GM12878 (cell line): ENCODE measurements at regions of chr6 and their contacts with region 1.

Region 1: GRCh38 chr6:96897383-96898240 is at the start of gene NDUFAF4:
- DNase-seq: peak; percentile 72
- ATAC-seq: peak; percentile 92
- H3K4me3 ChIP-seq: peak within 1 kb of the TSS; percentile 84
- H3K27ac ChIP-seq: peak within 1 kb of the TSS; percentile 79
- H3K4me1 ChIP-seq: no peaks in the 10 kb centered on the region
- H3K27me3 ChIP-seq: no peaks in the 10 kb centered on the region
- CTCF ChIP-seq: peak; percentile 89 to 96 (median 94)
- EP300 ChIP-seq: no peak
- POLR2A ChIP-seq: peak; percentile 77
- RAD21 ChIP-seq: peak; percentile 84
- polyA plus RNA-seq, gene NDUFAF4: 181 to 187 TPM

Region 2: GRCh38 chr6:96436393-96436792 is 461.2 kb before region 1 on chr6:
- CTCF ChIA-PET with region 1: no interaction called
- POLR2A ChIA-PET with region 1: no interaction called
- RAD21 ChIA-PET with region 1: no interaction called
- SMC1A ChIA-PET with region 1: no interaction called
- in situ Hi-C with region 1: no loop called
- intact Hi-C with region 1: no loop called
- DNase-seq: no peak
- ATAC-seq: no peak
- H3K4me3 ChIP-seq: no peak overlapping the region
- H3K27ac ChIP-seq: no peak overlapping the region
- H3K4me1 ChIP-seq: no peaks in the 10 kb centered on the region
- H3K27me3 ChIP-seq: no peaks in the 10 kb centered on the region
- CTCF ChIP-seq: no peak
- EP300 ChIP-seq: no peak
- POLR2A ChIP-seq: no peak
- RAD21 ChIP-seq: no peak

Region 3: GRCh38 chr6:96521644-96522464 is 375.8 kb before region 1 on chr6 and contains the start of gene UFL1:
- CTCF ChIA-PET with region 1: no interaction called
- POLR2A ChIA-PET with region 1: no interaction called
- RAD21 ChIA-PET with region 1: interaction called, 3 read pairs
- SMC1A ChIA-PET with region 1: no interaction called
- in situ Hi-C with region 1: loop called (anchors 10 kb)
- intact Hi-C with region 1: loop called (anchors 1 kb)
- DNase-seq: peak; percentile 68
- ATAC-seq: peak; percentile 94
- H3K4me3 ChIP-seq: peak within 1 kb of the TSS; percentile 91
- H3K27ac ChIP-seq: peak within 1 kb of the TSS; percentile 96
- H3K4me1 ChIP-seq: no peaks in the 10 kb centered on the region
- H3K27me3 ChIP-seq: no peaks in the 10 kb centered on the region
- CTCF ChIP-seq: no peak
- EP300 ChIP-seq: 0 out of 4 replicates have a peak, but pooled peaks of 1 of the 2 experiments have one; percentile 39
- POLR2A ChIP-seq: peak; percentile 100
- RAD21 ChIP-seq: no peak
- polyA plus RNA-seq, gene UFL1: 24.5 to 29.1 TPM

Region 4: GRCh38 chr6:96611342-96611991 is 286.1 kb before region 1 on chr6:
- CTCF ChIA-PET with region 1: interaction called, 7 read pairs
- POLR2A ChIA-PET with region 1: no interaction called
- RAD21 ChIA-PET with region 1: interaction called, 3 read pairs
- SMC1A ChIA-PET with region 1: interaction called, 3 read pairs
- in situ Hi-C with region 1: no loop called
- intact Hi-C with region 1: loop called (anchors 5 kb)
- DNase-seq: no peak
- ATAC-seq: peak; percentile 86
- H3K4me3 ChIP-seq: no peak overlapping the region
- H3K27ac ChIP-seq: 0 out of 2 replicates have a peak overlapping the region, but pooled peaks have one; percentile 4
- H3K4me1 ChIP-seq: peaks cover 34% of the 10 kb centered on the region
- H3K27me3 ChIP-seq: no peaks in the 10 kb centered on the region
- CTCF ChIP-seq: no peak
- EP300 ChIP-seq: peak; percentile 75 to 88; a peak in 3 of 4 replicates
- POLR2A ChIP-seq: no peak
- RAD21 ChIP-seq: no peak

Region 5: GRCh38 chr6:96837081-96837971 is 60.3 kb before region 1 on chr6 and contains the start of gene GPR63:
- CTCF ChIA-PET with region 1: interaction called, 4 read pairs
- POLR2A ChIA-PET with region 1: interaction called, 4 read pairs
- RAD21 ChIA-PET with region 1: interaction called, 8 read pairs
- SMC1A ChIA-PET with region 1: interaction called, 3 read pairs
- in situ Hi-C with region 1: no loop called
- intact Hi-C with region 1: loop called (anchors 1 kb)
- DNase-seq: peak; percentile 50
- ATAC-seq: peak; percentile 92
- H3K4me3 ChIP-seq: peak within 1 kb of the TSS; percentile 92
- H3K27ac ChIP-seq: peak within 1 kb of the TSS; percentile 62
- H3K4me1 ChIP-seq: no peaks in the 10 kb centered on the region; the same call in 1 of the 2 replicates
- H3K27me3 ChIP-seq: no peaks in the 10 kb centered on the region; a peak in 1 of 4 replicates
- CTCF ChIP-seq: 0 out of 6 replicates have a peak, but pooled peaks of 1 of the 3 experiments have one; percentile 5
- EP300 ChIP-seq: no peak; a peak in 1 of 4 replicates
- POLR2A ChIP-seq: peak; percentile 86
- RAD21 ChIP-seq: no peak
- polyA plus RNA-seq, gene GPR63: 1.6 to 1.7 TPM

Region 6: GRCh38 chr6:97053643-97054411 is 156.2 kb after region 1 on chr6:
- CTCF ChIA-PET with region 1: interaction called, 82 read pairs
- POLR2A ChIA-PET with region 1: no interaction called
- RAD21 ChIA-PET with region 1: interaction called, 43 read pairs
- SMC1A ChIA-PET with region 1: interaction called, 52 read pairs
- in situ Hi-C with region 1: loop called (anchors 5 kb)
- intact Hi-C with region 1: loop called (anchors 1 kb)
- DNase-seq: no peak
- ATAC-seq: no peak
- H3K4me3 ChIP-seq: no peak overlapping the region
- H3K27ac ChIP-seq: no peak overlapping the region
- H3K4me1 ChIP-seq: peaks cover 6% of the 10 kb centered on the region
- H3K27me3 ChIP-seq: no peaks in the 10 kb centered on the region
- CTCF ChIP-seq: peak in 2 of 3 experiments; percentile 29 to 36; a peak in 3 of 6 replicates
- EP300 ChIP-seq: no peak
- POLR2A ChIP-seq: no peak
- RAD21 ChIP-seq: peak; percentile 48

Region 7: DNA sequence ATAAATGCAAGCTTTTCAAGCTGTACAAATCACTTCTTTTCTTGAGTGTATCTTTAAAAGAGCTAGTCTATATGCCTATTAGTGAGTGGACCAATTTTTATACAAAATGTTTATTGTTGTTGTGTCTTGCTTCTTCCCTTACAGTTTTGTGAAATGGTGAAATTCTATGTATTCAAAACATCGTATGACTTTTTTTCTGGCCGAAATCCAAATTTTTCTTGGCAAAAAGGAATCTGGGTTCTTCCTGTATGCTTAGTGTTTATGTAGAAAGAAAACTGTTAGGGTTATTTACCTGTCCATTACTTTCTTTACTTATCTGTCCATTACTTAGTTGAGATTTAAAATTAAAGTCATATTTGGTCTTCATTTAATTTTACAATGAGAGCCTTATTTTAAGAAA is 231.5 kb after region 1 on chr6:
- CTCF ChIA-PET with region 1: no interaction called
- POLR2A ChIA-PET with region 1: no interaction called
- RAD21 ChIA-PET with region 1: no interaction called
- SMC1A ChIA-PET with region 1: no interaction called
- in situ Hi-C with region 1: no loop called
- intact Hi-C with region 1: no loop called
- DNase-seq: no peak
- ATAC-seq: no peak
- H3K4me3 ChIP-seq: no peak overlapping the region
- H3K27ac ChIP-seq: no peak overlapping the region
- H3K4me1 ChIP-seq: no peaks in the 10 kb centered on the region
- H3K27me3 ChIP-seq: no peaks in the 10 kb centered on the region
- CTCF ChIP-seq: no peak
- EP300 ChIP-seq: no peak
- POLR2A ChIP-seq: no peak
- RAD21 ChIP-seq: no peak